CD14-positive monocyte (primary cell): ENCODE measurements at regions of chr3 and their contacts with region 1.

Region 1: DNA sequence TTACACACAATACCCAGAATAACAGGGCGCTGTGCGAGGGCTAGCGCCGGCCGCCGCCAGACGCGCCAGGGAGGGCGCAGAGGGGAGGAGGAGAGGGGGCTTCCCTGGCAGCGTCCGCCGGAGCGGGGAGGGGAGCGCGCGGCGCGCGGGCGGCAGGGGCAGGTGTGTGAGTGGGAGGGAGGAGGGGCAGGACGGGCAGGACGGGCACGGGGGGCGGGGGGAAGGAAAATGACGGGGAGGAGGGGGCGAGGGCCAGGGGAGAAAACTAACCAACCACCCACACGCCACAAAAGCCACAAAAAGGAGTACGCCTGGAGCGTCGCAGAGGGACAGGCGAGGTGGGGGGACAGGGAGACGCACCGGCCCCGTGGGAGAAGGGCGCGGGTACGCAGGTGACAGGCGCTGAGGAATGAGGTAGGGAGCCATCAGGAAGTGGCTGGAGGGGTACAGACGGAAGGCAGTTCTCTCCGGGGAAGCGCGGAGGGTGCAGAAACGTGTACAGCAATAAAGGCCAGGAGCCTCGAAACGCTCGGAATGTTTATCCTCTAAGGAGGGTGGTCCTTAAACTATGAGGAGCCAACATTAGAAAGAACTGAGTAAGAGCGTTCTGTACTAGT is 610 bp upstream of the SATB1 start:
- DNase-seq: peak in 2 of 3 donors; percentile 19 to 28
- H3K4me3 ChIP-seq: peak overlapping the region; percentile 76 to 96 (median 87)
- H3K4me3 Mint-ChIP-seq: peak overlapping the region; percentile 93 to 99
- H3K27ac ChIP-seq: peak overlapping the region in 1 of 2 donors; percentile 90
- H3K27ac Mint-ChIP-seq: peak overlapping the region in 6 of 7 donors; percentile 53 to 96 (median 87)
- H3K4me1 ChIP-seq: peaks cover 18 to 34% of the 10 kb centered on the region in 2 donors
- H3K4me1 Mint-ChIP-seq: peaks cover 43% of the 10 kb centered on the region
- H3K27me3 ChIP-seq: no peaks in the 10 kb centered on the region
- H3K27me3 Mint-ChIP-seq: no peaks in the 10 kb centered on the region
- CTCF ChIP-seq: no peak

Region 2: GRCh38 chr3:17874632-17875031 is 551.1 kb before region 1 on chr3:
- intact Hi-C with region 1: no loop called
- DNase-seq: peak; percentile 25 to 52 (median 27)
- H3K4me3 ChIP-seq: peak overlapping the region in 1 of 3 experiments; percentile 10
- H3K4me3 Mint-ChIP-seq: no peak overlapping the region
- H3K27ac ChIP-seq: no peak overlapping the region
- H3K27ac Mint-ChIP-seq: peak overlapping the region in 4 of 7 donors; percentile 3 to 70 (median 6)
- H3K4me1 ChIP-seq: peaks cover 12 to 14% of the 10 kb centered on the region in 2 donors
- H3K4me1 Mint-ChIP-seq: peaks cover 15% of the 10 kb centered on the region
- H3K27me3 ChIP-seq: no peaks in the 10 kb centered on the region
- H3K27me3 Mint-ChIP-seq: no peaks in the 10 kb centered on the region
- CTCF ChIP-seq: no peak

Region 3: GRCh38 chr3:18436213-18436612 is 10.5 kb after region 1 on chr3:
- intact Hi-C with region 1: loop called in 1 of 2 experiments (anchors 1 kb)
- DNase-seq: no peak
- H3K4me3 ChIP-seq: no peak overlapping the region
- H3K4me3 Mint-ChIP-seq: no peak overlapping the region
- H3K27ac ChIP-seq: no peak overlapping the region
- H3K27ac Mint-ChIP-seq: no peak overlapping the region
- H3K4me1 ChIP-seq: peaks cover 4 to 12% of the 10 kb centered on the region in 2 donors
- H3K4me1 Mint-ChIP-seq: peaks cover 19% of the 10 kb centered on the region
- H3K27me3 ChIP-seq: no peaks in the 10 kb centered on the region
- H3K27me3 Mint-ChIP-seq: no peaks in the 10 kb centered on the region
- CTCF ChIP-seq: no peak

Region 4: GRCh38 chr3:18489939-18490338 is 64.2 kb after region 1 on chr3:
- intact Hi-C with region 1: no loop called
- DNase-seq: no peak
- H3K4me3 ChIP-seq: no peak overlapping the region
- H3K4me3 Mint-ChIP-seq: no peak overlapping the region
- H3K27ac ChIP-seq: no peak overlapping the region
- H3K27ac Mint-ChIP-seq: no peak overlapping the region
- H3K4me1 ChIP-seq: no peaks in the 10 kb centered on the region
- H3K4me1 Mint-ChIP-seq: no peaks in the 10 kb centered on the region
- H3K27me3 ChIP-seq: no peaks in the 10 kb centered on the region
- H3K27me3 Mint-ChIP-seq: peaks cover 0 to 2% (median 0%) of the 10 kb centered on the region in 3 donors
- CTCF ChIP-seq: no peak

Region 5: GRCh38 chr3:18559331-18559842 is 133.6 kb after region 1 on chr3:
- intact Hi-C with region 1: no loop called
- DNase-seq: peak; percentile 11 to 52 (median 48)
- H3K4me3 ChIP-seq: no peak overlapping the region
- H3K4me3 Mint-ChIP-seq: no peak overlapping the region
- H3K27ac ChIP-seq: no peak overlapping the region
- H3K27ac Mint-ChIP-seq: no peak overlapping the region
- H3K4me1 ChIP-seq: no peaks in the 10 kb centered on the region
- H3K4me1 Mint-ChIP-seq: peaks cover 8% of the 10 kb centered on the region
- H3K27me3 ChIP-seq: no peaks in the 10 kb centered on the region
- H3K27me3 Mint-ChIP-seq: peaks cover 0 to 2% (median 1%) of the 10 kb centered on the region in 3 donors
- CTCF ChIP-seq: peak; percentile 86